SK-N-SH (cell line): ENCODE measurements at regions of chr3 and their contacts with region 1.

Region 1: DNA sequence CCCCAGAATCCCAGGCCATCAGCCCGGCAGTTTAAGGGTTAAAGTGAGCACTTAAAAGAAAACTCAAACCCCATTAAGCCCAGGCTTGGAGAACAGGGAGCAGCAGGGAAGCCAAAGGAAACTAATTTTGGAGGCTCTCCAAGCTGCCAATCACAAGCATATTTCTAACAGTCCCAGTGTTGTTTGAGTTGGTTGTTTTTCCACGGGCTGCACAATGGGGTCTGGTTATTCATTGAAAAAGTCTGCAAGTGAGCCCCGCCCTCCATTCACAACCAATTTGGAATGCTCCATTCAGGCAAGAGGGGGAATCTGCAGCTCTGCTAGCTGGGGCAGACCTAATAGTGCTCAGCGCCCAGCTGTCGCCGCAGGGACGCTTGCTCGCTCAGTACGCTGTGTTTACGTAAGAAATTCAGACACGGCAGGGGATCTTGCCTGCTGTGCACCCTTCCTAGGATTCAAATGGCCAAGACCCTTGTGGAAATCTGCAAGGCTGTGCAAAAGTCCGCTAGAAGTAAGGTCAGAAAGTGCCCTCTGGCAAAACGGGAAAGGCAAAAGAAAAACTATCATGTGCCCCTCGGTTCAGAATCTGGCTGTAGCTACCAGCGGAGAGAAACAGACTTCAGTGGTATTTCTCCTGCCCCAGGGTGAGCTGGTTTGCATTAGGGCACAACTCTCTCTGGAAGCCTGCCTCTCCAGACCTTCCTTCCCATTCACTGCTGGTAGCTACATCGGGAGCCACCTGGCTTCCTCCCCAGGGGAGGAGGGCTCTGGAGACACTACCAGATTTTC is 11.0 kb downstream of the ETV5 start:
- DNase-seq: peak; percentile 84
- H3K4me3 ChIP-seq: peak overlapping the region; percentile 42 to 59
- H3K27ac ChIP-seq: peak overlapping the region; percentile 57 to 98
- H3K4me1 ChIP-seq: peaks cover 35 to 40% of the 10 kb centered on the region in 2 experiments
- H3K27me3 ChIP-seq: no peaks in the 10 kb centered on the region
- CTCF ChIP-seq: no peak
- EP300 ChIP-seq: peak in 1 of 2 experiments; percentile 8; a peak in 1 of 4 replicates
- RAD21 ChIP-seq: no peak

Region 2: DNA sequence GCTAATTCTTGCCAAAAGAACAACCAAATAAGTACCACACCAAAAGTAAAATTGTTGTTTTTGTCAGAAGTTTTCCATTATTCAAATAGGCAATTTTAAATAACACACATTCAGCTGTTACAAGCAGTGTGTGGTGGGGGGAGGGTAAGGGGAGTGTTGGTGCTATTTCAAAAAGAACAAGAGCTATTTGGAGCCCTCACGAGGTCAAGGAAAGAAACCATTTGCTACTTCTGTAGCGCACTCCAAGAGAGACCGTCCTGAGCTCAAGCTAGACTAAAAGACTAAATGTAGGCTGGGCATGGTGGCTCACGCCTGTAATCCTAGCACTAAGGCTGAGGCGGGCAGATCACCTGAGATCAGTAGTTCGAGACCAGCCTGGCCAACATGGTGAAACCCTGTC is 251.8 kb before region 1 on chr3:
- CTCF ChIA-PET with region 1: no interaction called
- POLR2A ChIA-PET with region 1: no interaction called
- DNase-seq: no peak
- H3K4me3 ChIP-seq: no peak overlapping the region
- H3K27ac ChIP-seq: no peak overlapping the region
- H3K4me1 ChIP-seq: no peaks in the 10 kb centered on the region
- H3K27me3 ChIP-seq: no peaks in the 10 kb centered on the region
- CTCF ChIP-seq: no peak
- EP300 ChIP-seq: no peak
- RAD21 ChIP-seq: no peak

Region 3: DNA sequence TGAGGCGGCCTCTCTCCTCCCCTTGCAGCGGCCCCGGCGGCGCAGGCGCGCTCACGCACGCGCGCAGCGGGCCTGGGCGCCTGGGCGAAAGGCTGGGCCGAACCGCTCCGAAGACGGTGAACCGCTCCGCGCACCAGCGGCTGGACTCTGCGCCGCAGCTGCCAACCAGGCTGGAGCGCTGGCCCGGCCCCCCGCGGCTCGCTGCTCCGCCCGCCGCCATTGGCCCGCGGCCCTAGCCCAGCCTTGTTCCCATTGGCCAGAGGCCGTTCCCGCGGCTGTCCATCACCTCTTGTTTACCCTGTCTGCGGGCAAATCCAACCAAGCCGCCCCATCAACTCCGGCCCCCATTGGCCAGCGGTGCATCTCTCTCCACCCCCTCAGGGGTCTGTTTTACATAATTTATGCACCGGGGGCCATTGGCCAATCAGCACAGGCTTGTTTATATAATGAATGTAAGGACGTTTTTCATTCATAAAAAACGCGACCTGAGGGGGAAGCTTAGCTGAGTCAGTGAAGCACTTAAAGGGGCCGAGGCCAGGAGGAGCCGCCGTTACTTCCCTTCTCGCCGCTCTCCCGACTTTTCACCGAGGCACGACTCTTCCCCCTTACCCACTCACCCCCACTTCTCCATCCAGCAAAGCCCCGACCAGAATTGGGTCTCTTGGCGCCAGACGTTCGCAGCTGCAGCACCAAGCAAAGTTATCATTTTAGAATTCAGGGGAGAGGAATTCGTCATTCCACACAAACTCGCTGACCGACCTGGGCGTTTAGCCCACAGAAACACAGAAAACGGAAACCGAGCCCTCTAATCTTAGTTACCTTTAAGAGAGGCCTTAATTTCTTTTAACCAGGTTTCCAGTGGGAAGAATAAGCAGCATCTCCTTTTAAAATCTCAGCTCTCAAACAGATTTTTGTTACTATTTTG is 11.3 kb after region 1 on chr3 and contains the start of gene ETV5:
- CTCF ChIA-PET with region 1: interaction called, 19 read pairs
- POLR2A ChIA-PET with region 1: interaction called, 16 read pairs
- DNase-seq: peak; percentile 96
- H3K4me3 ChIP-seq: peak within 1 kb of the TSS; percentile 83 to 96
- H3K27ac ChIP-seq: peak within 1 kb of the TSS; percentile 93 to 97
- H3K4me1 ChIP-seq: peaks cover 18 to 22% of the 10 kb centered on the region in 2 experiments
- H3K27me3 ChIP-seq: no peaks in the 10 kb centered on the region; the same call in 1 of the 2 replicates
- CTCF ChIP-seq: no peak
- EP300 ChIP-seq: no peak
- RAD21 ChIP-seq: no peak
- polyA plus RNA-seq, gene ETV5: 17.4 and 20.9 TPM in 2 replicates